ENCODE measurements at regions of chr17 and their contacts with region 1.

Region 1: DNA sequence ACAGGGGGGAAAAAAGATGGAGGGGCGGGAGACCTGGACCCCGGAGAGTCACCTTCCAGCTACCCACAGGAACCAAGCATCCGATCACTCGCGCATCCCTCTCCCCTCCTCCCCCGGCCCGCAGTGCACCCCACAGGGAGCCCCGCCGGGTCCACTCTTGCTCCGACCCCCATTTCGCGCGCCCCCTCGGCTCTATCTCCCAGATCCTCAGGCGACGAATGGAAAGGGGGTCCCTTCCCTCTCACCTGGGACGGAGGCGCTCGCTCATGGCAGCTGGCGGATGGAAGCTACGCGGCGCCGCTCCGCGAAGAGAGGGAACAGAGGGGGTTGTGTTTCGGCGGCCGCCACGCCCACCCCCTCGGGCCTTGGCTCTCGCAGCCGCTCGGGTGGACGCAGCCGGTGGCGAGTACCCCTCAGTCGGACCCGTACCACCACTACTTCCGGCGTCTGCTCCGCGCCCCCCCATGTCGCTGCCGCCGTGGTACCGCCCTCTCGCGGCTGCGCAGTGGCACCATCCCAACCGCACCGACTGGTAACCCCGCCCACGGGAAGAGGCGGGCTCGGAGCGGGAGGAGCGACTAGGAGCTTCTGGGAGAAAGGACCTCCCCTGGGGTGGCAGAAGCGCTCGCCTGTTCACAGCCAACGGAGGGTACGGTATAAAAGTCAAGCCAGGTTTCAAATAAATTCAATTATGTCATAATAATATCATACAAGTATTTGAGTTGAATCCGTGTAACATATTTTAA is 29.7 kb downstream of the CPSF4L start:
- H3K4me3 ChIP-seq: peak overlapping the region; percentile 93
- H3K27ac ChIP-seq: peak overlapping the region; percentile 74
- H3K4me1 ChIP-seq: peaks cover 13% of the 10 kb centered on the region
- CTCF ChIP-seq: peak; percentile 92

Region 2: GRCh38 chr17:73192894-73193701 is 38.9 kb before region 1 on chr17 and contains the start of gene COG1:
- CTCF ChIA-PET with region 1: interaction called, 20 read pairs
- POLR2A ChIA-PET with region 1: interaction called, 23 read pairs
- H3K4me3 ChIP-seq: peak within 1 kb of the TSS; percentile 93
- H3K27ac ChIP-seq: peak within 1 kb of the TSS; percentile 98
- H3K4me1 ChIP-seq: peaks cover 3% of the 10 kb centered on the region; the same call in 1 of the 2 replicates
- CTCF ChIP-seq: peak; percentile 73; the same call in 1 of the 2 replicates

Region 3: DNA sequence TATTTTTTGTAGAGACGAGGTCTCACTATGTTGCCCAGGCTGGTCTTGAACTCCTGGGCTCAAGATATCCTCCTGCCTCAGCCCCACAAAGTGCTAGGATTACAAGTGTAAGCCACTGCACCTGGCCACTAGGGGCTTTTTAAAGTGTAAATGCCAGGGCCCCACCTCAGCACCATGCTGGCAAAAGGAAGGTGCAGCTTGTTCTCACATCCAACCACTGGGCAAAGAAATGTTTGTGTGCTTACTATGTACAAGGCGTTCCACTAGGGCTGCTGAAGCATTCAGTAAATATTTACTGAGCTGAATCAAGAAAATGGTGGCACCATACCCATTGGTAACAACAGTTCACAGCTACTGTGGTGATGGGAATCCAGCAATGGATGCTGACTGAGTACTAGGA is 16.6 kb before region 1 on chr17:
- CTCF ChIA-PET with region 1: interaction called, 14 read pairs
- POLR2A ChIA-PET with region 1: interaction called, 13 read pairs
- H3K4me3 ChIP-seq: no peak overlapping the region
- H3K27ac ChIP-seq: no peak overlapping the region
- H3K4me1 ChIP-seq: peaks cover 2% of the 10 kb centered on the region; the same call in 1 of the 2 replicates
- CTCF ChIP-seq: no peak

Region 4: GRCh38 chr17:73247726-73248125 is 15.7 kb after region 1 on chr17:
- CTCF ChIA-PET with region 1: interaction called, 6 read pairs
- POLR2A ChIA-PET with region 1: interaction called, 10 read pairs
- H3K4me3 ChIP-seq: no peak overlapping the region
- H3K27ac ChIP-seq: no peak overlapping the region
- H3K4me1 ChIP-seq: no peaks in the 10 kb centered on the region
- CTCF ChIP-seq: no peak

Region 5: DNA sequence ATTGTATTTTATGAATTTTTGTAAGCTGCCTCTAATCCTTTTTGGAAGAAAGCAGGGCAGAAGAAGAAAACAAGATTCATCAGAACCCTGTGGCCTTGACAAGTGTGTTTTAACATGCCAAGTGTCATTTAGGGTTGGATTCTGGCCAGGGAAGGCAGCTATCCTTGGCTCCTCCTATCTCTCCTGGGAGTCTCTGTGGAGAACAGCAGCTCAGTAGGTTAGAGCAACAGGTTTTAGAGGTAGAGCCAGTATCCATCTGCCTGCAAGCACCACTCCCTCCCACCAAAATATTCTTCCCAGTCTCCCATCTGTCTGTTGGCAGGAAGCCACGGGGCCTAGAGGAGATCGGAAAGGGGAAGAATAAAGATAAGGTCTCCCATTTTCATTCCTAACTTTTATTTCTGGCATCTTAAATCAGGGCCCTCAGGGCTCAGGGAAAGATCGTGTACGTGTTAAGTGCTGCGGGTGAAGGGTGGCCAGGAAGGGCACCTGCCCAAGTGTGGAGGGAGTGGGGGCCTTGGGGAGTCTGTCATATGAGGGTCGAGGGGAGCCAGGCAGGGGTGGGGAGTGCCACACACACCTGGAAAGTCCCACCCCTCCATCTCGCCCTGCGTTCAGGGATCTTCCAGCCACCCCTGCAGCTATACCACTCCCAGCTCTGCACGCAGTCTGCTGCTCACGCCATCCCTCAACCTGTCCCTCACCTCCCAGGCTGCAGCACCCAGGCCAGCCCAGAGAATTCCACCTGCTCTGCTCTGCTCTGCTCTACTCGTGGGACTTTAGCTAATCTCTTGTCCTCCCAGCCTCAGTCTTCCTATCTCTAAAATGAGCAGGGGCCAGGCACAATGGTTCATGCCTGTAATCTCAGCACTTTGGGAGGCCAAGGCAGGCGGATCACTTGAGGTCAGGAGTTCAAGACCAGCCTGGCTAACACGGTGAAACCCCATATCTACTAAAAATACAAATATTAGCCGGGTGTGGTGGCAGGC is 46.7 kb after region 1 on chr17:
- CTCF ChIA-PET with region 1: no interaction called
- POLR2A ChIA-PET with region 1: no interaction called
- H3K4me3 ChIP-seq: no peak overlapping the region
- H3K27ac ChIP-seq: peak overlapping the region; percentile 62
- H3K4me1 ChIP-seq: peaks cover 16% of the 10 kb centered on the region
- CTCF ChIP-seq: no peak

Region 6: DNA sequence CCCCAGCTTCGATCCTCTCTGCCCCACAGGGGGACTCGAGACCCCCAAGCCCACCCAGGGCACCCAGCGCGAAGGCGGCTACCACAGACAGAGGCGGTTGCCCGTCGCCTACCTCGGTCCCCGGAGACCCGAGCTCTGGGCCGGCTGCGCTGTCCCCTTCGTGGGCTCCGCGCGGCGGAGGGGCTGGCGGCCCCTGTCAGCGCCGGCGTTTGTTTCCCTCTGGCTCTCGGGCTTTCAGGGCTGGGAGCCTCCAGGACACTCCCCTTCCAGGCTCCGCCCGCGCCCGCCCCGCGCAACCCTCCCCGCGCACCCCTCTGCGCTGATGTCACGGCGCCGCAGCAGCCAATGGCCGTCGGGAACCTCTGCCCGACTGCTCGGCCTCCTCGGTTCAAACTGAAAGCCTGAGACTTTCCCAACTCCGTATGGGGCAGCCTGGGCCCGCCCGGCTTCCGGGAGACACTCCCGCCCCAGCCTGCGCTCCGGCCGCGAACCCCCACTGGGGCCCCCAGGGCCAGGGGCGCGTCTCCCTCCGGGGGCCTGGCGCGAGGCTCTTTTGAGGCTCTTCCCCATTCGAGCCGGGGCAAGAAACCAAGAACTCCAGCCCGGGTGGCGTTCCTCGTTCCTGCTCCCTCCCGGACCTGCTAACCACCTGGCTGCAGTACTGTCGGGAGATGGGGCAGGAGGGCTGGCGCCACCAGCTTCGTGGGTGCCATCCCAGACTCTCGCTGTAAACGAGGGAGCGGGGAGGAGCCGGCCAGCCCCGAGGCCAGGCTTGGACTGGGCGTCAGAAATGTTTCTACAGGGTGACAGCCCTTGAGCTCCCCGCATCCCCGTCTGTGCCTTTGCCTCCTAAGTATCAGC is 80.0 kb after region 1 on chr17 and contains the start of gene CDC42EP4:
- CTCF ChIA-PET with region 1: interaction called, 3 read pairs
- POLR2A ChIA-PET with region 1: interaction called, 15 read pairs
- H3K4me3 ChIP-seq: peak within 1 kb of the TSS; percentile 86
- H3K27ac ChIP-seq: peak within 1 kb of the TSS; percentile 88
- H3K4me1 ChIP-seq: peaks cover 19% of the 10 kb centered on the region
- CTCF ChIP-seq: no peak

Measured in HEK293 (cell line).